CD4-positive, alpha-beta T cell (primary cell): ENCODE measurements at regions of chr17 and their contacts with region 1.

Region 1: GRCh38 chr17:50139950-50140871 is 10.3 kb upstream of the SAMD14 start:
- DNase-seq: peak; percentile 71 to 89 (median 78)
- ATAC-seq: peak; percentile 91
- H3K4me3 ChIP-seq: peak overlapping the region; percentile 17
- H3K4me3 Mint-ChIP-seq: peak overlapping the region; percentile 57
- H3K27ac ChIP-seq: peak overlapping the region in 1 of 2 donors; percentile 49
- H3K27ac Mint-ChIP-seq: peak overlapping the region; percentile 76
- H3K4me1 ChIP-seq: peaks cover 79% of the 10 kb centered on the region
- H3K4me1 Mint-ChIP-seq: peaks cover 67% of the 10 kb centered on the region
- H3K27me3 ChIP-seq: no peaks in the 10 kb centered on the region
- H3K27me3 Mint-ChIP-seq: no peaks in the 10 kb centered on the region
- CTCF ChIP-seq: peak; percentile 94

Region 2: GRCh38 chr17:50151041-50151936 is 11.1 kb after region 1 on chr17:
- CTCF ChIA-PET with region 1: interaction called, 7 read pairs
- POLR2A ChIA-PET with region 1: interaction called, 50 read pairs
- intact Hi-C with region 1: loop called in 1 of 2 experiments (anchors 1 kb)
- DNase-seq: peak; percentile 68 to 95 (median 80)
- ATAC-seq: peak; percentile 64
- H3K4me3 ChIP-seq: peak overlapping the region; percentile 86
- H3K4me3 Mint-ChIP-seq: peak overlapping the region; percentile 90
- H3K27ac ChIP-seq: peak overlapping the region; percentile 47 to 74
- H3K27ac Mint-ChIP-seq: peak overlapping the region; percentile 84
- H3K4me1 ChIP-seq: peaks cover 54% of the 10 kb centered on the region
- H3K4me1 Mint-ChIP-seq: peaks cover 51% of the 10 kb centered on the region
- H3K27me3 ChIP-seq: no peaks in the 10 kb centered on the region
- H3K27me3 Mint-ChIP-seq: no peaks in the 10 kb centered on the region
- CTCF ChIP-seq: peak; percentile 52

Region 3: GRCh38 chr17:50177983-50178834 is 38.0 kb after region 1 on chr17:
- CTCF ChIA-PET with region 1: no interaction called
- POLR2A ChIA-PET with region 1: no interaction called
- intact Hi-C with region 1: loop called in 1 of 2 experiments (anchors 5 kb)
- DNase-seq: peak; percentile 23 to 77 (median 40)
- ATAC-seq: peak; percentile 92
- H3K4me3 ChIP-seq: no peak overlapping the region
- H3K4me3 Mint-ChIP-seq: peak overlapping the region; percentile 39
- H3K27ac ChIP-seq: no peak overlapping the region
- H3K27ac Mint-ChIP-seq: no peak overlapping the region
- H3K4me1 ChIP-seq: peaks cover 12% of the 10 kb centered on the region
- H3K4me1 Mint-ChIP-seq: peaks cover 16% of the 10 kb centered on the region
- H3K27me3 ChIP-seq: no peaks in the 10 kb centered on the region
- H3K27me3 Mint-ChIP-seq: no peaks in the 10 kb centered on the region
- CTCF ChIP-seq: peak; percentile 58

Region 4: DNA sequence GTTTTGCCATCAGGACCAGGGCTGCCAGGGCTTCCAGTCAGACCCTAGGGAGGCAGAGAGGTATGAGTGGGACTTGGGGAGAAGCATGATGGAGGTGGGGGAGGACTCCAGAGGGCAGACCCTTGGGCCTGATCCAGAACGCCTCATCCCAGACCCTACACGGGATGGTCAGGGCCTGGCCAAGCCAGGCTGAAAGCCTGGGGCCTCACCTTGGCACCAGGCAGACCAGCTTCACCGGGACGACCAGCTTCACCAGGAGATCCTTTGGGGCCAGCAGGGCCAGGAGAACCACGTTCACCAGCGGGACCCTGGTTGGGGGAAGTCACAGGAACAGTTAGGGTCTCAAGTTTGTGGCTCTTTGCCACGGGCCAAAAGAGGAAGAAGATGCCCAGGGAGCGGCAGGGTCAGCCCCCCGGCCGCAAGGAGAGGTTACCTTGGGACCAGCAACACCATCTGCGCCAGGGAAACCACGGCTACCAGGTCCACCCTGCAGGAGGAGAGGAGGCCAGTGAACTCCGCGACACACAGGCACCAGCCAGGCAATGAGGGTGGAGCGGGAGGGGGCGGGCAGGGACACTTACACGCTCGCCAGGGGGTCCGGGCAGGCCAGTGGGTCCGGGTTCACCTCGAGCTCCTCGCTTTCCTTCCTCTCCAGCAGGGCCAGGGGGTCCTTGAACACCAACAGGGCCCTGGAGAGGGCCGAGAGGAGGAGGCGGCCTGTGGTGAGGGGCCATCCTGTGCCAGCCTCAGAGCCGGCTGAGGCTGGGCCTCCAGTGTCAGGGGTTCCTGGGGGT is 54.1 kb after region 1 on chr17:
- CTCF ChIA-PET with region 1: no interaction called
- POLR2A ChIA-PET with region 1: no interaction called
- intact Hi-C with region 1: no loop called
- DNase-seq: no peak
- ATAC-seq: no peak
- H3K4me3 ChIP-seq: no peak overlapping the region
- H3K4me3 Mint-ChIP-seq: no peak overlapping the region
- H3K27ac ChIP-seq: no peak overlapping the region
- H3K27ac Mint-ChIP-seq: no peak overlapping the region
- H3K4me1 ChIP-seq: peaks cover 2% of the 10 kb centered on the region
- H3K4me1 Mint-ChIP-seq: peaks cover 9% of the 10 kb centered on the region
- H3K27me3 ChIP-seq: peaks cover 0 to 4% of the 10 kb centered on the region in 2 experiments
- H3K27me3 Mint-ChIP-seq: peaks cover 19% of the 10 kb centered on the region
- CTCF ChIP-seq: no peak

Region 5: GRCh38 chr17:50443368-50443971 is 303.3 kb after region 1 on chr17:
- CTCF ChIA-PET with region 1: no interaction called
- POLR2A ChIA-PET with region 1: no interaction called
- intact Hi-C with region 1: no loop called
- DNase-seq: no peak
- ATAC-seq: no peak
- H3K4me3 ChIP-seq: no peak overlapping the region
- H3K4me3 Mint-ChIP-seq: no peak overlapping the region
- H3K27ac ChIP-seq: no peak overlapping the region
- H3K27ac Mint-ChIP-seq: no peak overlapping the region
- H3K4me1 ChIP-seq: no peaks in the 10 kb centered on the region
- H3K4me1 Mint-ChIP-seq: no peaks in the 10 kb centered on the region
- H3K27me3 ChIP-seq: no peaks in the 10 kb centered on the region
- H3K27me3 Mint-ChIP-seq: no peaks in the 10 kb centered on the region
- CTCF ChIP-seq: no peak